Right lobe of liver (tissue), 6 donors: ENCODE measurements at regions of chr2 and their contacts with region 1.

Region 1: DNA sequence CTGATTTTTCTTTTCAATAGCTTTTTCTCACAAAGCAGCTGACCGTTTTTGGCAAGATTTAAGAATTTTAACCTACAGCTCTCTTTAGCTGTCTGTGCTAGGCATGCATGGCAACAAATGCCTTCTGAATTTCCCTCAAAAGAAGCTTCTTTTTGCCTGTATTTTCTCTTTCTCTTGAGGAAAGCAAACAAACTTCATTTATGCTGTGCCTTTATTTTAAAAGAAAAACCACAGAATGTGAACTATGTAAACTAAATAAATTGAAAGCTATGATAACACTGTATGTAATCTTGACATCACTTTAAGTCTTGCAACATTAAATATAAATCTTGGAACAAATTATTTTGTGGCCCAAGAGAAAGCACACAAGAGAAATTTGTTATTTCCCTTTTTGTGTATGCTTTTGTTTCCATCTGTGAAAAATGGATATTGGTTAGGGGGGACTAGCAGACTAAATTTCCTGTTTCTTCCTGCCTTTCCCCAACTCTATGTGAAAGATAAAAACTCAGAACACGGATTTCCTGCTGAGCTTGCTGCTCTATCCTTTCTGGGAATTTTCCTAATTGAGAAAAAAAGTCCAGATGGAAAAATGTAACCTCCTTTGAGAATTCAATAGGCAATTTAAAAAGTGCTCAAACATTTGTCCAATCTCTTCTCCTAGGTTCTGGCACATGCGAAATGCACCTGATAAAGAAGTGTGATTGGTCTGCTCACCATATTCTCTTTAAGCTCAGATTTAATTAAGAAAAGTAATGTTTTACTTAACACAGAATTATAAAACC is 20.9 kb upstream of the TFPI start:
- DNase-seq: no peak
- ATAC-seq: peak; percentile 43 to 80 (median 68)
- H3K4me3 ChIP-seq: no peak overlapping the region
- H3K27ac ChIP-seq: peak overlapping the region in 2 of 3 donors; percentile 6 to 14
- H3K4me1 ChIP-seq: no peaks in the 10 kb centered on the region
- H3K27me3 ChIP-seq: no peaks in the 10 kb centered on the region
- CTCF ChIP-seq: no peak
- POLR2A ChIP-seq: no peak

Region 2: GRCh38 chr2:187499941-187500532 is 75.1 kb before region 1 on chr2:
- intact Hi-C with region 1: loop called in 1 of 2 experiments (anchors 5 kb)
- DNase-seq: peak in 1 of 3 donors; percentile 61
- ATAC-seq: peak; percentile 82 to 93 (median 90)
- H3K4me3 ChIP-seq: no peak overlapping the region
- H3K27ac ChIP-seq: no peak overlapping the region
- H3K4me1 ChIP-seq: peaks cover 0 to 8% (median 2%) of the 10 kb centered on the region in 4 donors
- H3K27me3 ChIP-seq: no peaks in the 10 kb centered on the region
- CTCF ChIP-seq: peak; percentile 84 to 91 (median 86)
- POLR2A ChIP-seq: no peak

Region 3: GRCh38 chr2:187698374-187699110 is 123.4 kb after region 1 on chr2:
- intact Hi-C with region 1: no loop called
- DNase-seq: no peak
- ATAC-seq: no peak
- H3K4me3 ChIP-seq: no peak overlapping the region
- H3K27ac ChIP-seq: no peak overlapping the region
- H3K4me1 ChIP-seq: no peaks in the 10 kb centered on the region
- H3K27me3 ChIP-seq: no peaks in the 10 kb centered on the region
- CTCF ChIP-seq: no peak
- POLR2A ChIP-seq: no peak